Lower lobe of right lung (tissue), 2 donors: ENCODE measurements at regions of chr4 and their contacts with region 1.

Region 1: GRCh38 chr4:153573881-153574802 is 108.0 kb downstream of the TMEM131L start:
- DNase-seq: peak; percentile 63
- ATAC-seq: peak; percentile 87 to 88
- H3K4me3 ChIP-seq: no peak overlapping the region
- H3K27ac ChIP-seq: no peak overlapping the region
- H3K4me1 ChIP-seq: peaks cover 20% of the 10 kb centered on the region
- H3K27me3 ChIP-seq: no peaks in the 10 kb centered on the region
- CTCF ChIP-seq: peak; percentile 65

Region 2: DNA sequence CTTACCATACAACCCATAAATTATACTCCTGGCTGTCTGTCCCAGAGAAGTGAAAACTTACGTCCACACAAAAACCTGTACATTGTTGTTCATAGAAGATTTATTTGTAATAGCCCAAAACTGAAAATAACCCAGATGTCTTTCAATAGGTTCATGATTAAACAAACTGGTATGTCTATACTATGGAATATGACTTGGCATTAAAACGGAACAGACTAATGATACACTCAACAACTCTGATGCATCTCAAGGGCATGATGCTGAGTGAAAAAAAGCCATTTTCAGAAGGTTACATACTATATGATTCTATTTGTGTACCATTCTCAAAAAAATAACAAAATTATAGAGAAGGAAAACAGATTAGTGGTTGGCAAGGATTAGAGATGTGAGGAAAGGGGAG is 241.2 kb before region 1 on chr4:
- intact Hi-C with region 1: no loop called
- DNase-seq: no peak
- ATAC-seq: no peak
- H3K4me3 ChIP-seq: no peak overlapping the region
- H3K27ac ChIP-seq: no peak overlapping the region
- H3K4me1 ChIP-seq: no peaks in the 10 kb centered on the region
- H3K27me3 ChIP-seq: no peaks in the 10 kb centered on the region
- CTCF ChIP-seq: no peak

Region 3: GRCh38 chr4:153344131-153345010 is 229.8 kb before region 1 on chr4 and contains the start of gene MND1:
- intact Hi-C with region 1: loop called (anchors 10 kb)
- DNase-seq: peak; percentile 87
- ATAC-seq: peak; percentile 97
- H3K4me3 ChIP-seq: peak within 1 kb of the TSS; percentile 76
- H3K27ac ChIP-seq: no peak within 1 kb of the TSS
- H3K4me1 ChIP-seq: peaks cover 14% of the 10 kb centered on the region
- H3K27me3 ChIP-seq: no peaks in the 10 kb centered on the region
- CTCF ChIP-seq: peak; percentile 95
- total RNA-seq, gene MND1: 0.83 TPM